ENCODE measurements at regions of chr2 and their contacts with region 1.

Region 1: GRCh38 chr2:210195101-210195852 is 24.1 kb upstream of the KANSL1L start:
- DNase-seq: peak; percentile 64

Region 2: DNA sequence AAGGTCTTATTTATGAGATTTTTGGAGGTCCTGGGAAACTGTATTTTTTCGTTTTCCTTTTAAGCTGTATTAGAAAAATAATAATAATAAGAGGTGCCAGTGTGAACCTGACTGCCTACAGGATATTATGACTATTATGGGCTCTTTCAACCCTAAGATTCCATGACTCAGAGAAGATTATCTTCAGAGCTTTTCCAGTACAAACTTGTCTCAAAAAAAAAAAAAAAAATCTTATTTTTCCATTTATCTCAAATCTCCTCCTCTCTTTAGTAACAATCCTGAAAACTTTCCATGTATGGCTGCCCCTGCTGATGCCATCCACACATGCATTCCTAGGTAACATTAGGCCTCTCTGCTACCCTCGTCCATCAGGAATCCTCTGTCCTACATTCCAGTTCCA is 229.6 kb before region 1 on chr2:
- in situ Hi-C with region 1: no loop called
- DNase-seq: no peak

Region 3: DNA sequence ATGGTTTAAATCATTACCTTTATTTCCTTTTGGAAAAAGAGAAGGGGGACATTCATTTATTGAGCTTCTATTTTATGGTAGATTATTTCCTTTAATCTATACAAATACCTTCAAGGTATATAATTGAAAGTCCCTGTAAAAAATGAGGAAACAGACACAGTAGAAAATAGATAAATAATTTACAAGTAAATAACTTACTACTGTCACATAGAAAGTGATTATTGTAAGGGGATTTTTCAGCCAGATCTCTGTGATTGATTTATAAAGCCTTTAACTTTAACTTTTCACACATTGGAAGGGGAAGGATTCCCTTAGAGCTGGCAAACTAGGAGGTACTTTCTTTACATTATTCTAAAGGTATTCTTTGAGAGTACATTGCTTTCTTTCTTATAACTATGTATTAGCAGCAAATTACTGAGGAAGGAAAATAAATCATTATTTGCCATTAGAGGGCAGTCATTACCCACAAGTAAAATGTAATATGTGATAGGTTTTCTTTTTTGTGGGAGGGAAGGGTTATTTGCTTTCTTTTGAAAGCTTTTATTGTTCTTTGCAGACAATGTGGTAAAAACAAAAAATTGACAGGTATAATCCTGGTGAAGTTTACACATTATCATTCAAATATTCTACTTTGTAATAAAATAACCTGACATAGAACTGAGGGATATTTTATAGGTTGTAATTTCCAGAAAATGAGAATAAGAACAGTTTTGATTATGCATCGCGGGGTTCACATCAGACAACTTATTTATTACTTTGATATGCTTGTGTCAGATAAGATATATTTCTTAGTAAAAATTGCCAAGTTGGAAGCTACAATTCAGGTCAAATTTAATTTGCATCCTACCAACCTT is 217.7 kb before region 1 on chr2:
- in situ Hi-C with region 1: loop called (anchors 25 kb)
- DNase-seq: peak; percentile 68

Measured in KBM-7 (cell line).